Cardiac septum (tissue), 1 donor: ENCODE measurements at regions of chr11 and their contacts with region 1.

Region 1: DNA sequence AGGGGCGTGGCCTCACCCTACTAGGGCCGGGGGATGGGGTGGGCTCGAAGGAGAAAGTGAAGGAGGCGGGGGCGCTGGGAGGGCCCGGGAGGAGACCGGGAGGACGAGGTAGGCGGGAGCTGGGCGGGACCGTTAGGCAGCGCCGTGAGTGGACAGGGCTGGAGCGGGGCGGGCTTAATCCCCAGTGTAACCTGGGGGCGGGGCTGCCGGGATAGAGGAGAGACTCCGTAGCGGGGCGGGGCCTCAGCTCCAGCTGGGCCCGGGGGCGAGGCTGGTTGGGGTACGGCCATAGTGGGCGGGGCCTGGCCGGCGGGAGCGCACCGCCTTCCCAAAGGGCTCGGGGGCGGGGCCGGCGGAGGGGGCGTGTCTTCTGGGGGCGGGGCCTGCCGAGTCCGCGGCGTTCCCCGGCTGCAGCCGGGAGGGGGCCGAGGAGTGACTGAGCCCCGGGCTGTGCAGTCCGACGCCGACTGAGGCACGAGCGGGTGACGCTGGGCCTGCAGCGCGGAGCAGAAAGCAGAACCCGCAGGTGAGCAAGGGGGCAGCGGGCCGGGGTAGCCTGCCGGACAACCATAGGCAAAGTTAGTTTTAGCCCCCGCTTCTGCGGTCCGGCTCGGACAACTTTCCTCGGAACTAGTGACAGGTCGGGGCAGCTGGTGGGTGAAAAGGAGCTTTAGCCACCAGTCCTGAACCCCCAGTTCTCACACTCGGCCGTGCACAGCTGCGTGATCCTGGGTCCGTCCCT is at the start of gene CD82:
- DNase-seq: peak; percentile 100
- total RNA-seq, gene CD82: 27.9 TPM

Region 2: GRCh38 chr11:44470854-44471253 is 94.5 kb before region 1 on chr11:
- intact Hi-C with region 1: no loop called
- DNase-seq: peak; percentile 66

Region 3: DNA sequence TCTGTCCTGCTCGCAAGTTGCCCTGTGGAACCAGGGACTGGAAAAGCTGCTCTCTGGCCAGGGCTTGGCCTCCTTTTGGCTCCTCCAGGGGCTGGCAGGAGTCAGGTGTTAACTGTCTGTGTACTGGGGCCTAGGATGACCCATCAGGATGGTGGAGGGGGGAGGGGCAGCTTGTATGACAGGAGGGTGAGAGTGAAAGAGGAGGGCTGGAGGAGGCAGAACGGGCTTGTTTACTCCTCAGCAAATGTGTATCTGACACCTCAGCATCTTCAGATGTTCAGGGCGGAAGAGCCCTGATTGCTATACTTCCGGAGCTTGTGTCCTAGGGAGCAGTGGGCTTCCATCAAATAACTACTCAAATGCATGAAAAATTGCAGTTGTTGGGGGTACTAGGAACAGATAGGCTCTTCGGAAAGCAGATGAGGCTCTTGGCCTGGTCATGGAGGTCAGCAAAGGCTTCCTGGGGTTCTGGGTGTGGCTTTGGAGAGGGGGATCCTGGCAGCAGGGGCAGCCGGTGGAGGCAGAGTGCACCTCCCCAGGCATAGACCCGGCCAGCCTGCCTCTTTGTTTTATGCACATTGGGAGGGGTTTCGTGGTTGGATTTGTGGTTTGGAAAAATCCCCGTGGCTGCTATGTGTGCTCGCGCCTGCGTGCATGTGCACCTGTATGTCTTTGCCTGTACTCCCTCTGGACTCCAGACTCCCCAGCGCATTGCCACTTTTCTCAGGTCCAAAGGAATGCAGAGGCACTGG is 31.3 kb after region 1 on chr11:
- intact Hi-C with region 1: loop called (anchors 5 kb)
- DNase-seq: no peak

Region 4: DNA sequence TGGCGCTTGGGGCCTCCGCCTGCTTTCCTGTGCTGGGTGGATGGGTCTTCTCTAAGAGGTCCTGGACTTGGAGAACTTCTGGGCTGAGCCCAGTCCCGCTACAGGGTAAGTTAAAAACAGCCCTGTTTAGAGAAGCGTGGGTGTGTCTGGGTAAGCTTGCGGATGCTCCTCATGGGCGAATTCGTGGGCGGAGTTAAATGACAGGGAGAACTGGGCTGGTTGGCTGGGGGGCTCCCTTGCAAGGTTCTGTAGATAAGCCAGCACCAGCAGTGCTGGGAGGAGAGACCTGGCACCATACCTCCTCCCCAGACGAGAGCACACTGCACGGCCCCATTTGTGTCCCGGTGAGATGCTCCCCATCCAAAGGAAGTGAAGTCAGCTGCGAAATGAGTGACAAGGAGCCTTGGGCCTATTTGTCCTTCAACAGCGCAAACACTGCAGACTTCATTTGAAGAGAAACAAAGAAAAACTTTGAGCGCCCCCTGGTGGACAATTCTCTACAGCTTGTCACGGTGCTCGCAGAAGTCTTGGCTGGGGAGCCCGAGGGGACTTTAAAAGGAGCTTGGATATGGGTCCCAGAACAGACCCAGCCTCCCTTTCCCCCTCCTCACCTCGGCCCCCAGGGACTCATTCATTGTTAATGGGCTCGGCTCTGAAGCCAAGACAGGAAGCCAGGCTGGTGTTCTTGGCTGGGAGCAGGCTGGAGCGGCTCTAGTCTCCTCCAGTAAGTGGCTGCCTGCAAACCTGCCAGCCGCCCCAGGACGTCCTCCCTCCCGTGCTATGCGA is 345.8 kb after region 1 on chr11:
- intact Hi-C with region 1: loop called (anchors 5 kb)
- DNase-seq: peak; percentile 84